ENCODE measurements at regions of chr2 and their contacts with region 1.

Region 1: GRCh38 chr2:38750891-38751595 is at the start of gene SRSF7:
- DNase-seq: peak; percentile 98
- H3K4me3 Mint-ChIP-seq: peak within 1 kb of the TSS; percentile 90
- H3K27ac Mint-ChIP-seq: peak within 1 kb of the TSS; percentile 97
- H3K4me1 Mint-ChIP-seq: peaks cover 30% of the 10 kb centered on the region
- H3K27me3 Mint-ChIP-seq: no peaks in the 10 kb centered on the region
- CTCF ChIP-seq: no peak
- total RNA-seq, gene SRSF7: 196 and 275 TPM in 2 replicates

Region 2: GRCh38 chr2:38377050-38377828 is 373.8 kb before region 1 on chr2 and contains the start of gene ATL2:
- CTCF ChIA-PET with region 1: no interaction called
- POLR2A ChIA-PET with region 1: interaction called, 15 read pairs
- intact Hi-C with region 1: no loop called
- DNase-seq: peak; percentile 94
- H3K4me3 Mint-ChIP-seq: peak within 1 kb of the TSS; percentile 94
- H3K27ac Mint-ChIP-seq: peak within 1 kb of the TSS; percentile 98
- H3K4me1 Mint-ChIP-seq: peaks cover 31% of the 10 kb centered on the region
- H3K27me3 Mint-ChIP-seq: no peaks in the 10 kb centered on the region
- CTCF ChIP-seq: no peak
- total RNA-seq, gene ATL2: 54.2 and 61.3 TPM in 2 replicates

Region 3: DNA sequence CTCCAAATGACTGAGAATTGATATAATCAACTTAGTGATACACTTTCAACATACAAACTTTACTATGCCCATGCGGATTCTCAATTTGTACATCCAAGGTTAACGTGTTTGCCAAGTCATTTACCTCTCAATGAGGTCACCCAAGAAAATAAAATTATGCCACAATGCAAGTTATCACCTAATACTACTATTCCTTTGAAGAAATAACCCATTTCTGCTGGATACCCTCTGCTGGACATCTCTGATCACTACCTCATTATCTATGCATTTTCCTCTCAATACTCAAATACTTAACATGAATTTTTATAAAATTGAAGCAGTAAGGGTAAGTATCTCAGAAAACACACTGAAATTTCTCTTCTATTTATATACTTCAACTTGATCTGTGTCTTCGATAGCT is 161.0 kb before region 1 on chr2:
- CTCF ChIA-PET with region 1: no interaction called
- POLR2A ChIA-PET with region 1: interaction called, 13 read pairs
- intact Hi-C with region 1: no loop called
- DNase-seq: no peak
- H3K4me3 Mint-ChIP-seq: no peak overlapping the region
- H3K27ac Mint-ChIP-seq: no peak overlapping the region
- H3K4me1 Mint-ChIP-seq: peaks cover 12% of the 10 kb centered on the region
- H3K27me3 Mint-ChIP-seq: no peaks in the 10 kb centered on the region
- CTCF ChIP-seq: no peak

Region 4: DNA sequence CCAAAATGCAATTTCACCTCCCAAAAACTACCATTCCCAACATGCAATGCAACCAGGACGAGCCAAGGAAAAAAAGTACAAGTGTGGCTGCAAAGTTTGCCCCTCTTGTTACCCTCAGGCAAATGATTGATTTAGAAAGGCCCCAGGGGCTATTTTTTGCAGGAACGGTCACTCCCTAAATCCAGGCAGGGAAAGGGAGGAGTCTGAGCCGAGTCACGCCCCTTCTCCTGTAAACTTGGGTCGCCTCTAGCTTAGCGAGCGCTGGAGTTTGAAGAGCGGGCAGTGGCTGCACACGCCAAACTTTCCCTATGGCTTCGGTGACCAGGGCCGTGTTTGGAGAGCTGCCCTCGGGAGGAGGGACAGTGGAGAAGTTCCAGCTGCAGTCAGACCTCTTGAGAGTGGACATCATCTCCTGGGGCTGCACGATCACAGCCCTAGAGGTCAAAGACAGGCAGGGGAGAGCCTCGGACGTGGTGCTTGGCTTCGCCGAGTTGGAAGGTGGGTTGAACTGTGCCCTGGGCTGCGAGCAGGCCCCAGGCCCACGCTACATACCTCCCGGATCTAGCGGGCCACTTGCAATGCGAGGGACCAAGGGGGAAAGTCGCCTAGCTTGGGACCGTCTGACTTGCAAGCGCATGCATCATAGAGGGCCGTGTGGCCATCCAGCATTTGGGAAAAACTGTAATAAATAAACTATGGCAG is 85.0 kb before region 1 on chr2 and contains the start of gene GALM:
- CTCF ChIA-PET with region 1: no interaction called
- POLR2A ChIA-PET with region 1: no interaction called
- intact Hi-C with region 1: no loop called
- DNase-seq: no peak
- H3K4me3 Mint-ChIP-seq: no peak within 1 kb of the TSS
- H3K27ac Mint-ChIP-seq: no peak within 1 kb of the TSS
- H3K4me1 Mint-ChIP-seq: peaks cover 9% of the 10 kb centered on the region
- H3K27me3 Mint-ChIP-seq: peaks cover 13% of the 10 kb centered on the region
- CTCF ChIP-seq: no peak
- total RNA-seq, gene GALM: not detected in 2 replicates

Region 5: DNA sequence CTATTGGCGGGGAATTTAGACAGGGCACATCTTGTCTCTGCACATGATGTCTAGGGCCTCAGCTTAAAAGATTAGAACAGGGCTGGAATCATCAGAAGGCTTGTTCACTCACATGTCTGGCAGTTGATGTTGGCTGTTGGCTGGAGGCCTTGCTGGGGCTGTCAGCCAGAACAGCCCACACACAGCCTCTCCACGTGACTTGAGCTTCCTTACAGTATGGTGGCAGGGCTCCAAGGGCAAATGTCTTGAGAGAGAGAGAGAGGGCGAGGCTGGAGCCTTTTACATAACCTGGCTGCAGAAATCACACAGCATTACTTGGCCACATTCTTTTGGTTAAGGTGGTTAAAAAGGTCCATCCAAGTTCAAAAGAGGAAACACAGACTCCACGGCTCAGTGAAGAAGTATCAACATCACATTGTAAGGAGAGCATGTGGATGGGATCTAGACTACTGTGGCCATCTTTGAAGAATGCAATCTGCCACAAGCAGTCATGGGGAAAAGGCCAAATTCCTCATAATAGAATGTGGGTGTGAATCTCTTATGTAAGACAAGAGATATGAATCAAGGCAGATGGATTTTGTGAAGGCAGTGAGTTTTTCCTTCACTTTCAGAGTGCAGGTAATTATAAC is 30.3 kb before region 1 on chr2:
- CTCF ChIA-PET with region 1: interaction called, 3 read pairs
- POLR2A ChIA-PET with region 1: interaction called, 22 read pairs
- intact Hi-C with region 1: no loop called
- DNase-seq: peak; percentile 97
- H3K4me3 Mint-ChIP-seq: no peak overlapping the region
- H3K27ac Mint-ChIP-seq: peak overlapping the region; percentile 36
- H3K4me1 Mint-ChIP-seq: peaks cover 19% of the 10 kb centered on the region
- H3K27me3 Mint-ChIP-seq: no peaks in the 10 kb centered on the region
- CTCF ChIP-seq: no peak

Region 6: DNA sequence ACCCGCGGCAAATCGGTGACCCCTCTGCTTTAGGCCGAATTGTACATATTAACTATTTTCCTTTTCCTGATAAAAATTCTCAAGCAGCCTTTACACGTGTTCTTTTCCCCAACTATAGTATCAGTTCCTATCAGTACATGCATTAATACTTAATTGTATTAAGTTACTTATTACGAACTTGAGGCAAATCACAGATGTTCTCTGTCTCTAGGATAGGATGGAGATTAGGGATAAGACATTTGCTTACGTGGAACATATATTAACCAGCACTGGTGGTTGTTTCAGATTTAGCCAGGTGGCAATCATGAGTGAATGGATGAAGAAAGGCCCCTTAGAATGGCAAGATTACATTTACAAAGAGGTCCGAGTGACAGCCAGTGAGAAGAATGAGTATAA is 27.6 kb after region 1 on chr2:
- CTCF ChIA-PET with region 1: no interaction called
- POLR2A ChIA-PET with region 1: interaction called, 32 read pairs
- intact Hi-C with region 1: loop called (anchors 1 kb)
- DNase-seq: no peak
- H3K4me3 Mint-ChIP-seq: peak overlapping the region; percentile 99
- H3K27ac Mint-ChIP-seq: peak overlapping the region; percentile 95
- H3K4me1 Mint-ChIP-seq: peaks cover 8% of the 10 kb centered on the region
- H3K27me3 Mint-ChIP-seq: peaks cover 19% of the 10 kb centered on the region
- CTCF ChIP-seq: no peak

Region 7: GRCh38 chr2:39227628-39228412 is 476.8 kb after region 1 on chr2:
- CTCF ChIA-PET with region 1: no interaction called
- POLR2A ChIA-PET with region 1: no interaction called
- intact Hi-C with region 1: loop called (anchors 5 kb)
- DNase-seq: peak; percentile 65
- H3K4me3 Mint-ChIP-seq: no peak overlapping the region
- H3K27ac Mint-ChIP-seq: no peak overlapping the region
- H3K4me1 Mint-ChIP-seq: peaks cover 5% of the 10 kb centered on the region
- H3K27me3 Mint-ChIP-seq: no peaks in the 10 kb centered on the region
- CTCF ChIP-seq: peak; percentile 71